ENCODE measurements at regions of chr12 and their contacts with region 1.

Region 1: DNA sequence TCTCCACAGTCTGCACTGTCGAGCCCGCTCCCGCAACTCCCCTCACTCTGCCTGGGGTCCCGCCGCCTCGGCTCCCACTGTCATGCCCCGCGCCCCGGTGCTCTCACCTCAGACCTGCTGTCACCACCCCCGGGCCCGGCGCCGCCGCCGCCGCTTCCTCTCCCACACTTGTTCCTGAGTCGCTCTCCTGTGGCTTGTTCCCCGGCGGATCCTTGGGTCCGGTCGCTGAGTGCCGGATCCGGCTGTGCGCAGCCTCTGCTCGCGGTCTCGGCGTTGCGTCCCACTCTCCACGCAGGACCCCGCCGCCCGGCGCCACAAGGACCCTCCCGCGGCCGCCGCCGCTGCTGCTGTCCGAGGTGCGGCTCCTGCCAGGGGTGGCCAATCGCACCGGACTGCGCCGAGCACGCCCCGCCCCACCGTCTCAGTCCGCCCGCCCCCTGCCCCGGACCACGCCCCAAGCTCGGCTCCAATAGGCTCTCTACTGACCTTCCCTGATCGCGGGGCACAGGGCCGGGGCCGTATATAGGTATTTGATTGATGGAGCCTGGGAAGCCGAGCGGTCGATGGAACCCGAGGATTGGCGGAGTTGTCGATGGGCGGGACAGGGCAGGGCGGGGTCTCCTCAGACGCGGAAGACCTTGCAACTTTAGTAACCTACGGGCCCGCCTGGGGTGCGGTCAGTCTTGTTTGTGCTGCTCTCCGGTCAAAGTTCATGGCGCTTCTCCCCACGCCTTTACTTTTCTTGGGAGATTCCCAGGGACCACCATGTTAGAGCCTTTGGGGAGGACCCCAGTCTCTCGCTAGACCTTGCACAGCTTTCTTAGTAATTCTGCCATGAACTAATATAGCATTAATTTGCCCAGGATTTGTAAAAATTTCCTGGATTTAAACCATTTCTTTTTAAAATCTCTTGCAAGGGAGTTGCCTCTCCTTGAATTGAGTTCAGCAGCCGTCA is at the start of gene TAOK3:
- DNase-seq: peak; percentile 96 to 98 (median 96)
- H3K4me3 ChIP-seq: peak within 1 kb of the TSS; percentile 90
- H3K4me3 Mint-ChIP-seq: peak within 1 kb of the TSS; percentile 87 to 98 (median 92)
- H3K27ac ChIP-seq: peak within 1 kb of the TSS; percentile 74
- H3K27ac Mint-ChIP-seq: peak within 1 kb of the TSS; percentile 85 to 98 (median 94)
- H3K4me1 ChIP-seq: peaks cover 37% of the 10 kb centered on the region
- H3K4me1 Mint-ChIP-seq: peaks cover 44 to 73% (median 58%) of the 10 kb centered on the region in 3 donors
- H3K27me3 ChIP-seq: no peaks in the 10 kb centered on the region
- H3K27me3 Mint-ChIP-seq: peaks cover 0 to 3% of the 10 kb centered on the region in 2 donors
- total RNA-seq, gene TAOK3: 52.5 to 53.0 TPM

Region 2: GRCh38 chr12:118061011-118061875 is 311.6 kb before region 1 on chr12 and contains the start of gene WSB2:
- CTCF ChIA-PET with region 1: interaction called, 9 read pairs
- POLR2A ChIA-PET with region 1: interaction called, 12 read pairs
- DNase-seq: peak; percentile 40 to 74 (median 46)
- H3K4me3 ChIP-seq: peak within 1 kb of the TSS; percentile 76
- H3K4me3 Mint-ChIP-seq: peak within 1 kb of the TSS; percentile 91 to 100 (median 94)
- H3K27ac ChIP-seq: peak within 1 kb of the TSS; percentile 87
- H3K27ac Mint-ChIP-seq: peak within 1 kb of the TSS; percentile 95 to 99 (median 97)
- H3K4me1 ChIP-seq: peaks cover 40% of the 10 kb centered on the region
- H3K4me1 Mint-ChIP-seq: peaks cover 49 to 69% (median 61%) of the 10 kb centered on the region in 3 donors
- H3K27me3 ChIP-seq: no peaks in the 10 kb centered on the region
- H3K27me3 Mint-ChIP-seq: peaks cover 0 to 6% of the 10 kb centered on the region in 2 donors
- total RNA-seq, gene WSB2: 74.2 to 84.4 TPM

Region 3: DNA sequence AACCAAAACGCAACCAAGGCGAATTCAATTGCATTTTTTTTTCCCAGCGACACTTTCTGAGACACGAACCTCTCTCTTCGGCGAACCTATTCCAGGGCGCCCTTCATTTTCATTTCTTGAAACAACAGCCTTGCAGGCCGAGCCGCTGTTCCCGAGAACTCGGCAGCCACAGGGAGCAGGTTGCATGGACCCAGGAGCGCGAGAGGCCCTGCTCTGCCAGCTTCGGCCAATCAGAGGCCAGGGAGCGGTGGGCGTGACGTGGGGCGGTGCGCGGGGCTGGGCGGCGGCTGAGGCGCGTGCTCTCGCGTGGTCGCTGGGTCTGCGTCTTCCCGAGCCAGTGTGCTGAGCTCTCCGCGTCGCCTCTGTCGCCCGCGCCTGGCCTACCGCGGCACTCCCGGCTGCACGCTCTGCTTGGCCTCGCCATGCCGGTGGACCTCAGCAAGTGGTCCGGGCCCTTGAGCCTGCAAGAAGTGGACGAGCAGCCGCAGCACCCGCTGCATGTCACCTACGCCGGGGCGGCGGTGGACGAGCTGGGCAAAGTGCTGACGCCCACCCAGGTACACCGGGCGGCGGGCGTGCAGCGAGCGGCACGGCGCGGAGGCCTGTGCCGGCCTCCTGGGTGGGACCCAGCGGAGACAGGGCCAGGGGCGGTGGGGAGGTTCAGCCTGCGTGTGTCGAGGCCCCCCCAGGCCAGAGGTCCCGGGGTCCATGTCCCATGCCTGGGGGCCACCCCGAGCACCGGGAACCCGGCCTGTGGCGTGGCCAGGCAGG is 236.8 kb before region 1 on chr12 and contains the start of gene PEBP1:
- CTCF ChIA-PET with region 1: interaction called, 16 read pairs
- POLR2A ChIA-PET with region 1: interaction called, 3 read pairs
- DNase-seq: peak; percentile 87 to 92 (median 91)
- H3K4me3 ChIP-seq: peak within 1 kb of the TSS; percentile 77
- H3K4me3 Mint-ChIP-seq: peak within 1 kb of the TSS; percentile 90 to 98 (median 97)
- H3K27ac ChIP-seq: peak within 1 kb of the TSS; percentile 79
- H3K27ac Mint-ChIP-seq: peak within 1 kb of the TSS; percentile 88 to 96 (median 93)
- H3K4me1 ChIP-seq: peaks cover 12% of the 10 kb centered on the region
- H3K4me1 Mint-ChIP-seq: peaks cover 25 to 48% (median 46%) of the 10 kb centered on the region in 3 donors
- H3K27me3 ChIP-seq: no peaks in the 10 kb centered on the region
- H3K27me3 Mint-ChIP-seq: no peaks in the 10 kb centered on the region
- total RNA-seq, gene PEBP1: 140 to 142 TPM

Region 4: GRCh38 chr12:118183705-118184104 is 189.1 kb before region 1 on chr12:
- CTCF ChIA-PET with region 1: interaction called, 63 read pairs
- POLR2A ChIA-PET with region 1: no interaction called
- DNase-seq: no peak
- H3K4me3 ChIP-seq: no peak overlapping the region
- H3K4me3 Mint-ChIP-seq: no peak overlapping the region
- H3K27ac ChIP-seq: no peak overlapping the region
- H3K27ac Mint-ChIP-seq: peak overlapping the region in 1 of 8 donors; percentile 12
- H3K4me1 ChIP-seq: no peaks in the 10 kb centered on the region
- H3K4me1 Mint-ChIP-seq: peaks cover 19 to 30% (median 26%) of the 10 kb centered on the region in 3 donors
- H3K27me3 ChIP-seq: no peaks in the 10 kb centered on the region
- H3K27me3 Mint-ChIP-seq: no peaks in the 10 kb centered on the region

Region 5: GRCh38 chr12:118357257-118358007 is 15.4 kb before region 1 on chr12:
- CTCF ChIA-PET with region 1: interaction called, 95 read pairs
- POLR2A ChIA-PET with region 1: interaction called, 27 read pairs
- DNase-seq: peak; percentile 24 to 67 (median 61)
- H3K4me3 ChIP-seq: peak overlapping the region; percentile 4
- H3K4me3 Mint-ChIP-seq: peak overlapping the region; percentile 52 to 94 (median 88)
- H3K27ac ChIP-seq: peak overlapping the region; percentile 64
- H3K27ac Mint-ChIP-seq: peak overlapping the region; percentile 48 to 97 (median 88)
- H3K4me1 ChIP-seq: peaks cover 35% of the 10 kb centered on the region
- H3K4me1 Mint-ChIP-seq: peaks cover 49 to 72% (median 70%) of the 10 kb centered on the region in 3 donors
- H3K27me3 ChIP-seq: no peaks in the 10 kb centered on the region
- H3K27me3 Mint-ChIP-seq: no peaks in the 10 kb centered on the region

Region 6: DNA sequence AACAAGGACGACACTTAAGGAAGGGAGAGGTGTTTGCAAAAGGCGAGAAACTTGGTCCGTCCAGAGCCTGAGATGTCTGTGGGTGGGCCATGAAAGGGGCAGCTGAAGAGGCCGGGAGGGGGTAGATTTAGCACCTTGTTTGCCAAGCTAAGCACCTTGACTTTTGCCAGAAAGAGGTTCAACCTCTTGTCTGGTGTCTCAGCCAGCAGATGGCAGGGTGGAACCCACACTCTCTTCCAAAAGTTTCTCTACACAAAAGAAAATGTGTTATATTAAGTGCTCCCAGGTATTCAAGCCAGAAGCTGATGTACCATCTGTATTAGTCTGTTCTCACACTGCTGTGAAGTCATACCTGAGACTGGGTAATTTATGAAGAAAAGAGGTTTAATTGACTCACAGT is 73.4 kb after region 1 on chr12:
- CTCF ChIA-PET with region 1: no interaction called
- POLR2A ChIA-PET with region 1: no interaction called
- DNase-seq: no peak
- H3K4me3 ChIP-seq: no peak overlapping the region
- H3K4me3 Mint-ChIP-seq: no peak overlapping the region
- H3K27ac ChIP-seq: no peak overlapping the region
- H3K27ac Mint-ChIP-seq: peak overlapping the region in 1 of 8 donors; percentile 61
- H3K4me1 ChIP-seq: no peaks in the 10 kb centered on the region
- H3K4me1 Mint-ChIP-seq: no peaks in the 10 kb centered on the region
- H3K27me3 ChIP-seq: no peaks in the 10 kb centered on the region
- H3K27me3 Mint-ChIP-seq: peaks cover 22 to 35% of the 10 kb centered on the region in 2 donors